ENCODE measurements at regions of chr9 and their contacts with region 1.

Region 1: DNA sequence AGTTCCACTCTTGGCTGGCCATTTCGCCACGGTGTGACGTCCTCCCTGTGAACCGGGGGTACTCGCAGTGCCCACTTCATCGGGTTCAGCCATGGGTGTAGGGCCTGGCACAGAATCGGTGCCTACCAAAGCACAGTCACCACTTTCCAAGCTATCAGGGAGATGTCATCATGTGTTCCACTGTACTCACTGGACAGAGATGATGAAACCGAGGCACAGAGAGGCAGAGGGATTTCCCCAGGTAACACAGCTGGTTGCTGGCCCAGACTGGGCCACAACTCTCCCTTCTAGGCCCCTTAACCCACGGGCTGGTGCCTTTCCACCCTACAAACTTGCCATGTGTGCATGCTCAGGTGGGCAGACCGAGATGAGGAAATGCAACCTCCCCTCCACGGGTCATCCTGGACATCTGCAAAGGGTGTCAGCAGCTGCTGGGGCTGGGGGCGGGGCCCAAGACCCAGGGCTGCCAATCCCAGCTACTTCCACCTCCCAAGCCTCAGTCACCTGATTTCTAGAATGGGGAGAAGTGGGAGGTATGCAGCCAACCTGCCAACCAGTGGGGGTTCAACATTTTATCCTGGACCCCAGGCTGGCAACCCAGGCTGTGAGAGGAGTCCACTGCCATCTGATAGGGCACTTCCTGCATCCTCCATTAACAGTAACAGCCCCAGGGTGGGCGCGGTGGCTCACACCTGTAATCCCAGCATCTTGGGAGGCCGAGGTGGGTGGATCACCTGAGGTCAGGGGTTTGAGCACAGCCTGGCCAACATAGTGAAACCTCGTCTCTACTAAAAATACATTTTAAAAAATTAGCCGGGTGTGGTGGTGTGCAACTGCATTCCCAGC is 893 bp upstream of the SH2D3C start:
- DNase-seq: peak in 5 of 9 experiments; percentile 42 to 87 (median 50)
- ATAC-seq: peak; percentile 18
- H3K4me3 ChIP-seq: peak overlapping the region; percentile 87 to 89
- H3K4me3 Mint-ChIP-seq: peak overlapping the region; percentile 98
- H3K27ac ChIP-seq: peak overlapping the region; percentile 56 to 91
- H3K27ac Mint-ChIP-seq: peak overlapping the region; percentile 97
- H3K4me1 ChIP-seq: peaks cover 61% of the 10 kb centered on the region
- H3K4me1 Mint-ChIP-seq: peaks cover 68% of the 10 kb centered on the region
- H3K27me3 ChIP-seq: no peaks in the 10 kb centered on the region
- H3K27me3 Mint-ChIP-seq: no peaks in the 10 kb centered on the region
- CTCF ChIP-seq: no peak

Region 2: DNA sequence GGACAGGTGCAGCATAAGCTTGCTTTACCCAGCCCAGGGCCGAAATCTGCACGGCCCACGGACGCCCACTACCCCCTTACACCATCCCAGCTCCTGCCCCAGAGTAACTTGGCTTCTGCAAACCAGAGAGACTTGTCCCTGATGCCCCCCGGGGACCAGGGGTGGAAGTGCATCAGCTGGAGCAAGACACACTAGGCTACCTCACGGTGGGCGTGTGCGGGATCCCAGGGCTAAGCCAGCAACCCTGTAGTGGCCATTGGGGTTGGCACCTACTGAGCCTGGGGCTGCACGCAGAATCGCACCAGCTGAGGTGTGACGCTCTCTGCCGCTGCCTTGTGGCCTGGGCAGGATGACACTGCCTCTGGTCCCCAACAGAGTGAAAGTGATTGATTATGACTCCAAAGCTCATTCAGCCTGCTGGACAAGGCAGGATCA is 361.3 kb before region 1 on chr9:
- CTCF ChIA-PET with region 1: no interaction called
- POLR2A ChIA-PET with region 1: no interaction called
- intact Hi-C with region 1: no loop called
- DNase-seq: peak in 8 of 9 experiments; percentile 19 to 71 (median 51)
- ATAC-seq: peak; percentile 87
- H3K4me3 ChIP-seq: no peak overlapping the region
- H3K4me3 Mint-ChIP-seq: no peak overlapping the region
- H3K27ac ChIP-seq: no peak overlapping the region
- H3K27ac Mint-ChIP-seq: no peak overlapping the region
- H3K4me1 ChIP-seq: peaks cover 6% of the 10 kb centered on the region
- H3K4me1 Mint-ChIP-seq: peaks cover 4% of the 10 kb centered on the region
- H3K27me3 ChIP-seq: peaks cover 2% of the 10 kb centered on the region in 2 experiments
- H3K27me3 Mint-ChIP-seq: peaks cover 26% of the 10 kb centered on the region
- CTCF ChIP-seq: peak; percentile 24

Region 3: GRCh38 chr9:127904561-127905003 is 125.2 kb after region 1 on chr9:
- CTCF ChIA-PET with region 1: no interaction called
- POLR2A ChIA-PET with region 1: interaction called, 3 read pairs
- intact Hi-C with region 1: loop called in 1 of 2 experiments (anchors 5 kb)
- DNase-seq: peak in 1 of 9 experiments; percentile 29
- ATAC-seq: no peak
- H3K4me3 ChIP-seq: peak overlapping the region; percentile 58 to 62
- H3K4me3 Mint-ChIP-seq: peak overlapping the region; percentile 92
- H3K27ac ChIP-seq: peak overlapping the region; percentile 95 to 100
- H3K27ac Mint-ChIP-seq: peak overlapping the region; percentile 100
- H3K4me1 ChIP-seq: peaks cover 52% of the 10 kb centered on the region
- H3K4me1 Mint-ChIP-seq: peaks cover 53% of the 10 kb centered on the region
- H3K27me3 ChIP-seq: no peaks in the 10 kb centered on the region
- H3K27me3 Mint-ChIP-seq: no peaks in the 10 kb centered on the region
- CTCF ChIP-seq: no peak